Sciatic nerve (tissue), 2 donors: ENCODE measurements at regions of chr4 and their contacts with region 1.

Region 1: GRCh38 chr4:32909722-32910121 is 2189.6 kb downstream of the PCDH7 start:
- DNase-seq: no peak
- ATAC-seq: no peak

Region 2: GRCh38 chr4:32858971-32859370 is 50.8 kb before region 1 on chr4:
- intact Hi-C with region 1: no loop called
- DNase-seq: no peak
- ATAC-seq: no peak

Region 3: DNA sequence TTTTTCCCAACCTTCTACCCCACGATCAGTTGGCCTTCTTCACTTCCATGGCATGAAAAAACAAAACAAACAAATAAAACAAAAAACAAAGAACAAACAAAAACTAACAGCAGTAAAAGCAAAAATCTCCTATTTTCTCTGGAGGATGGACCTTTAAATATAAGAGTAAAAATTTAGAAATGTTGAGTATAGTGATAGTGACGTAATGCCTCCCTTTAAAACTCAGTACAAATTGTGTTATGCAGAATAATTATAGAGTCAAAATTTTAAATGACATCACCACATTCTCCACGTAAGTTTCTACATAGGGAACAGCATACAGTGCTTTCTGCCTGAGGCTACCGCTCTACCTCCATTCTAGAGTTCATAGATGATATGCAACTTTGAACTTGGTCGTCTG is 33.2 kb before region 1 on chr4:
- intact Hi-C with region 1: loop called (anchors 1 kb)
- DNase-seq: no peak
- ATAC-seq: no peak